MCF 10A (cell line): ENCODE measurements at regions of chr4 and their contacts with region 1.

Region 1: DNA sequence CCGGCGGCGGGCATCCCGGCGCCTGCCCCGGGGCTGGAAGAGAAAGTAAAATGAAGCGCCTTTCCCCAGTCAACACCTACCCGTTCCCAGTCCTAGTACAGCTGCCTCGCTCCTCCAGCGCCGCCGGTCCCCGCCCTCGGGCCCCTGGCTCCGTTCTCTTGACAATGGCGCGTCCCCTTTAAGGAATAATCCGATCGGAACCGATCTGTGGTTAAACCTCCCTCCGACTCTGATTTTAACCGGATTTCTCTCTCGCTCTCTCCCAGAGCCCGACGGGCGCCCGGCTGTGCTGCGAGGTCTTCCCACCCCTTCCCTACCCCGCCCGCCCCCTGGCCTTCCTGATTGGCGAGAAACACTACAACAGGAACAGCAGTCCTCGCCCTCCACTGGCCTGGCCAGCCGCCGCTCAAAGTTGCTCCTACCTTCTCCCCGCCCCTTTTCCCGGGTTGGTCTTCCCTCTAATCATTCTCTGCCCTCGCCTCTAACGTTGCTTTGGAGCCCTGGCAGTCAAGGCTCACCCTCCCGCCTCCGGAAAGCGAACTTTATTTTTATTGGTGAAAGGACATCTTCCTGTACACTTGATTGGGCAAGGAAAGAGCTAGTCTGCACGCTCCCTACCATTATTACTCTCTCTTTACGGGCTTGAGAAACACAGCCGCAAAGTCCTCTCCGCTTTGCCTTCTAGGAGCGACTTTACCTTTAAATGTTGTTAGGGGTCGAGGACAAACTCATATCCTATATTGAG is at the start of gene FRYL:
- DNase-seq: peak; percentile 100
- H3K4me3 Mint-ChIP-seq: peak within 1 kb of the TSS; percentile 94
- H3K27ac Mint-ChIP-seq: peak within 1 kb of the TSS; percentile 96
- H3K4me1 Mint-ChIP-seq: peaks cover 25% of the 10 kb centered on the region
- H3K27me3 Mint-ChIP-seq: no peaks in the 10 kb centered on the region
- CTCF ChIP-seq: no peak
- total RNA-seq, gene FRYL: 52.3 and 53.9 TPM in 2 replicates

Region 2: DNA sequence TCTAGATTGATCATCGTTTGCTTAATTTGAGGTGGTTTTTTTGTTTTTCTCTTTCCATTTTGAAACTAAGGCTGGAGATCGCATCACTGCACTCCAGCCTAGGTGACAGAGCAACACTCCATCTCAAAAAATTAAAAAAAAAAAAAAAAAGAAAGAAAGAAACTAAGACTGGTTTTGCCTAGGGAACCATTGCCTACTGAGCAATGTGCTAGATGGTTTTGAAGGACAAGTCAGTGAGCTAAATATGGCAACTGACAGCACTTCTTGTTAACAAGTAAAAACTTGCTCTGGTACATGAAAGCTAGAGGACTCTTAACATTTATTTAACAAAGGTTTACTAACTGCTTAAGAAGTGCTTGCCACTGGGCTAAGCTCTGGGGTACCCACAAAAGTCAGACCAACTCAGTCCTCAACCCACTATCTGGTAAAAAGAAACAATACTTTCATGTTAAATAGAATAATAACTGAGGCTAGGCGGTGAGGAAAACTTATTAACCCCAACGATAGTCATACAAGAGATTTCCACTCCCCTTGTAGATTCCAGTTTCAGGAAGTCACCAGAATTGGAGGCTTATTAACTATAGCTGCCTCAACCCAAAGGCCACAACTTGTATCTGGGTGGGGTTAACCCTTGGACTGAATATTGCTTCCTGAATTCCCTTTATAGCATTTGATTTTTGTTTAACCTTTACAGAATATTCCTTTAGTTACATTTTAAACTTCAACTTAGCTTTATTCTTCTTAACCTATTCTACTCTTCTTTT is 111.7 kb before region 1 on chr4:
- CTCF ChIA-PET with region 1: no interaction called
- POLR2A ChIA-PET with region 1: interaction called, 22 read pairs
- intact Hi-C with region 1: no loop called
- DNase-seq: peak; percentile 22
- H3K4me3 Mint-ChIP-seq: no peak overlapping the region
- H3K27ac Mint-ChIP-seq: peak overlapping the region; percentile 1
- H3K4me1 Mint-ChIP-seq: peaks cover 28% of the 10 kb centered on the region
- H3K27me3 Mint-ChIP-seq: no peaks in the 10 kb centered on the region
- CTCF ChIP-seq: no peak

Region 3: DNA sequence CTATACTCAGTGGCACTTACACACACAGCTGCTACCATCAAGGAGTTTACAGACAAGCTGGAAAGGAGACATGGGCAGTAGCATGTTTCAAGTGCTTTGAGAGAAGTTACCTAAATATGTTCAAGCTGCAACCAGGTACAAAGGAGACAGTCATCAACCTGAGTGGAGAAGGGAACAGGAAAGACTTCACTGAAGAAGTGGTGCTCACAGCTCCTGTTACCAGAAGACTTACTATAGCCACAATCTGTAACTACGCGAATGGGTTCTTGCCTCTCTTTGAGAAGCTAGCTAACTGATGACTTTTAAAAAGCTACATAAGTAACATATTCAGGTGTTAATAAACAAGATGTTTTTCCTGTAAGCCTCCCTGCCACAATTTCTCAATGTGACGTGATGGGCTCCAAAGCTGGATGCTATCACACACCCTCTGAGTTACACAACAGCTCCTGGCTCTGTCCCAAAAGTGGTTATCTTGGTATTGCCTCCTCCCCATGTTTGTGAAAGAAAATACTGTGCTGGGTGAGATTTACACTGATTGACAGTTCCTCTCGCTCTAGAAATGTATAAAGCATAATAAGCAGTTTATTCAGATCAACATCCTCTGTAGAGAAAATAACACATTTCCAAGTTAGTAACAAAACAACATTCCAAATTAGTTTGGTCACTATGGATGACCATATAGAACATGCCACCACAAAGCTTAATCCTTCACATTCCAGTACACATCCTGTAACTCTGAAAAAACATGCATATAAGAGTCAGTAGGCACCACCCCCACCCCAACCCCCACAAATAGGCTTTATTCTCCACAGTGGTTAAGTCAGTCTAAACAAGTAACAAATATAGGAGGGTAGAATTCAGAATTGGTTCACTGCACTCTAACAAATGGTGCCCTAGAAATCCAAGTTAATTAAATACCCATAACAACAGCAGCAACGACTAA is 81.9 kb before region 1 on chr4:
- CTCF ChIA-PET with region 1: interaction called, 7 read pairs
- POLR2A ChIA-PET with region 1: interaction called, 223 read pairs
- intact Hi-C with region 1: loop called (anchors 1 kb)
- DNase-seq: peak; percentile 97
- H3K4me3 Mint-ChIP-seq: peak overlapping the region; percentile 43
- H3K27ac Mint-ChIP-seq: peak overlapping the region; percentile 80
- H3K4me1 Mint-ChIP-seq: peaks cover 34% of the 10 kb centered on the region
- H3K27me3 Mint-ChIP-seq: no peaks in the 10 kb centered on the region
- CTCF ChIP-seq: no peak

Region 4: DNA sequence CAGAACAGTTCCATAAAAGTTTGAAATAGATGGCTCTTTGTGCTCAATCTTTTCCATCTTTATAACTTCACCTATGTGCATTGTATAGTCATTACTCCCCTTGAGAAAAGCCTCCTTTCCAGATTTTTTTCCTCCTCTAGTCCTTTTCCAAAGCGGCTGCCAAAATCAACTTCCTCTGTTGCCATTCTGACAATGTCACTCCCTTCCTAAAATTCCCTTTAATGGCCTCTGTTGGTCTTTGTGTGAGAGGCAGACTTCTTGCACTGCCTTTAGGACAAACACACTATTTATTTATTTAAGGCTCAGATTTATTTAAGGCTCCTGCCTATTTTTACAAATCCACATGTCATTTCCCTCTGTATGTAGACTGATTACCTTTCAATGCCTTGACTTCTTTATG is 21.6 kb after region 1 on chr4:
- CTCF ChIA-PET with region 1: interaction called, 4 read pairs
- POLR2A ChIA-PET with region 1: interaction called, 21 read pairs
- intact Hi-C with region 1: no loop called
- DNase-seq: peak; percentile 30
- H3K4me3 Mint-ChIP-seq: peak overlapping the region; percentile 10
- H3K27ac Mint-ChIP-seq: peak overlapping the region; percentile 94
- H3K4me1 Mint-ChIP-seq: peaks cover 17% of the 10 kb centered on the region
- H3K27me3 Mint-ChIP-seq: no peaks in the 10 kb centered on the region
- CTCF ChIP-seq: no peak

Region 5: DNA sequence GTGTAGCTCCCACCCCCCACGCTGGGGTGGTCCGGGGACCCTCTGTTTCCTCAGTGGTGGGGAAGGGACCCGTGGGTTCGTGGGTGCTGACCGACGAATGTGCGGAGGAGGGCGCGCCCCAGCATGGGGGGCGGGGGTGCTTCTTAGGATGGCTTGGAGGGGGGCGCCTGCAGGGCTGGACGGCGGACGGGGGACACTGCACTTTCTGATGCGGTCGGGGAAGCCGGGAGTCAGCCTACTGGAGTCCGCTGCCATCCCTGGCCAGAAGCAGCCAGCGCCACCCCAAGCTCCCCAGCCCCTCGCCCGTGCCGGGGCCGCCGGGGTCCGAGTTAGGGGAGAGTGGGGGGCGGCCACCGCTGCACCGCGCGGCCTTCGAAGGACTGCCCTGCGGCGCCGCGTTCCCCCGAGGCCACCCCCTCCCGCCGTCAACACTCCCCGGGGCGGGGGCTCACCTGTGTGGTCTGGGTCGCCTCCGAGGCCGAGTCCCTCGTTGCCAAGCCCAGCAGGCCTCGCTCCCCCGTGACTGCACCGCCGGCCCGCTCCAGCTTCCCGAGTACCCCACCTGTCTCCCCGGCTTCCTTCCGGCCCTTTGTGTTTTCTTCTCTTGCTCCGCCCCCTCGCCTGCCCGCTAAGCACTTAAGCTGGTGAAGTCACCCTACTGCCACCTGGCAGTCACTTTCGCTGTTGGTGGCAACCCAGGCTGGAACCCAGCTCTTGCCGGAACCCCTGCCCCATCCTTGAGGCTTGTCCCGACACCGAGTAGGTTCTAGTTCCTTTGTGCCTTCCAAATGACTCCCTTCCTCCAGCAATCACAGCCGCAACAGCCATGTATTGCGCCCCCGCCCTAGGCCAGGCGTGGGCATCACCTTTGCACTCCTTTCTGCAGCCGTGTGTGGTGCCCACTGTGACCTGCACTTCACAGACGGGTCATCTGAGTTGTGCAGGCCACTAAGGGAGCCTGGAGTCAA is 126.3 kb after region 1 on chr4 and contains the start of gene OCIAD2:
- CTCF ChIA-PET with region 1: interaction called, 6 read pairs
- POLR2A ChIA-PET with region 1: interaction called, 16 read pairs
- intact Hi-C with region 1: loop called (anchors 5 kb)
- DNase-seq: peak; percentile 64
- H3K4me3 Mint-ChIP-seq: peak within 1 kb of the TSS; percentile 82
- H3K27ac Mint-ChIP-seq: peak within 1 kb of the TSS; percentile 76
- H3K4me1 Mint-ChIP-seq: peaks cover 40% of the 10 kb centered on the region
- H3K27me3 Mint-ChIP-seq: no peaks in the 10 kb centered on the region
- CTCF ChIP-seq: no peak
- total RNA-seq, gene OCIAD2: 66.3 and 94.1 TPM in 2 replicates

Region 6: GRCh38 chr4:48930654-48931053 is 150.5 kb after region 1 on chr4:
- CTCF ChIA-PET with region 1: no interaction called
- POLR2A ChIA-PET with region 1: no interaction called
- intact Hi-C with region 1: no loop called
- DNase-seq: no peak
- H3K4me3 Mint-ChIP-seq: no peak overlapping the region
- H3K27ac Mint-ChIP-seq: no peak overlapping the region
- H3K4me1 Mint-ChIP-seq: no peaks in the 10 kb centered on the region
- H3K27me3 Mint-ChIP-seq: no peaks in the 10 kb centered on the region
- CTCF ChIP-seq: no peak

Region 7: DNA sequence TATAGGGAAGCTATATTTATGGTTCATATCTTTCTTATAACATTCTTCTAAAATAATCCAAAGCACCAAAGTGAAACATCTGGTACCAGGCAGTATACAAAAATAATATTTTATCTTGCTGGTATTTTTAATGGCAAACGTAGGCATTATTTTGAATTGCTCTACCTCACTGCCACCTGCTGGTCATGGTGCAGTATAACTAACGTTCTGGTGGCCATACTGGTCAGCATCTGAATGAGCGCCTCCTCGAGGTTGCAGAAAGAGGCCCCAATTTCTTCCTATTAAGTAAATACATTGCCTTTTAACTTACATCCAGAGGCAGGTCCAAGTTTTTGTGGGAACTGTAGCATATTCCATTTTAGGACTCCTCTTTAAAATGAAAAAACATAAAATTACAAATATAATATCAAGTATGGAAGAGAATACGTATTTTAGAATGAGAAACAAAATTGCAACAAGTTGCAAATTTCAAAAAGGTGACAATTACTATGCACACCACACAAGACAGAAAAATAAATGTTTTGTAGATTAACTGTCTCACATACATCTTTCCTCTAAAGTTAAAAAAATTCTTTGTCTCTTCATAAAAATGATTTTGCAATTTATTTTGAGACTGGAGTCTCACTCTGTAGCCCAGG is 183.0 kb after region 1 on chr4:
- CTCF ChIA-PET with region 1: interaction called, 8 read pairs
- POLR2A ChIA-PET with region 1: interaction called, 16 read pairs
- intact Hi-C with region 1: loop called (anchors 1 kb)
- DNase-seq: peak; percentile 91
- H3K4me3 Mint-ChIP-seq: no peak overlapping the region
- H3K27ac Mint-ChIP-seq: no peak overlapping the region
- H3K4me1 Mint-ChIP-seq: peaks cover 19% of the 10 kb centered on the region
- H3K27me3 Mint-ChIP-seq: no peaks in the 10 kb centered on the region
- CTCF ChIP-seq: peak; percentile 99